A673 (cell line): ENCODE measurements at regions of chr15 and their contacts with region 1.

Region 1: DNA sequence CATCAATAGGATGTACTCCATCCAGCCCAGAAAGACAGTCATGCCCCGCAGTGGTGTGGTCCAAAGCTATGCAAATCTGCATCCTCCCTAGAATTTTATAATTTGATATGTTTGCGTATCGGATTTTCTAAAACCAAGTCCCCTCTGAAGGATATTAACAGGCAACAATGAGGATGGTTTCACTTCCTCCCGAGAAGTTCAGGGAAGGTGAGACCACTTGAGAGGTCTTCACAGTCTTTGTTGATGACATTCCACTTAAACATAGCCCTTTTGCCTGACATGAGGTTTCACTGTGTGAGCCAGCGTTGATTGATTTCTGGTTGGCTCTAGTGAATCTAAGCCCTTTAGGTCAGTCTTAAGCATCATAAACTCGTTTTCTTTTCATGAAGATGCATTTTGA is 276.1 kb downstream of the NR2F2 start:
- DNase-seq: no peak
- H3K4me3 ChIP-seq: no peak overlapping the region
- H3K27ac ChIP-seq: no peak overlapping the region
- H3K4me1 ChIP-seq: peaks cover 4% of the 10 kb centered on the region
- H3K27me3 ChIP-seq: no peaks in the 10 kb centered on the region
- CTCF ChIP-seq: no peak

Region 2: DNA sequence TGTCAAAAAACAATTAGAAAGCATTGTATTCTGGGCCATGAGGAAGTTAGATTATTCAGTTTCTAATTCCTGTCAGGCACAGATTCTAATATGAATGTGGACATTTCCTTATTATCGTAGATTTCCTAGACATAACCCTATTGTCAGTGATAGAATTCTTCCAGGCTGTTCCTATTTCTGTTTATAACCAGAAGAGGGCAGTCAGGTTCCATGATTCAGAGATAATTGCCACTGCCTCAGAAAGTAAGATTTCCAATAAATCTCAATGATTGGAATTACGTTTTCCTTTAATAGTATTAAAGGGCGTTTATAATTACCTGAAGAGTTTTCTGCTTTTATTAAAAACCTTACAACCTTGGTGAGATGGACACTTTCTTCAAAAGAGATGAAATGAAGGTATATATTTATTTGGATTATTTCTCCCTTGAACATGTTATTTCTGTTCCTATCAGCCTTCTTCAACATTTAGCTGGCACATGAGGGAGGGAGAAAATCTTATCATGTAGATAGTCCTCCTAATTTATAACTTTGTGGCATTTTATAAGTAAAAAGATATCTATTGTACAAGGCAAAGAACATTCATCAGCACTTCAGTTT is 1936.1 kb before region 1 on chr15:
- CTCF ChIA-PET with region 1: no interaction called
- POLR2A ChIA-PET with region 1: no interaction called
- intact Hi-C with region 1: loop called (anchors 10 kb)
- DNase-seq: peak; percentile 59
- H3K4me3 ChIP-seq: no peak overlapping the region
- H3K27ac ChIP-seq: no peak overlapping the region
- H3K4me1 ChIP-seq: peaks cover 9% of the 10 kb centered on the region
- H3K27me3 ChIP-seq: no peaks in the 10 kb centered on the region
- CTCF ChIP-seq: peak; percentile 80